ENCODE measurements at regions of chr12 and their contacts with region 1.

Region 1: DNA sequence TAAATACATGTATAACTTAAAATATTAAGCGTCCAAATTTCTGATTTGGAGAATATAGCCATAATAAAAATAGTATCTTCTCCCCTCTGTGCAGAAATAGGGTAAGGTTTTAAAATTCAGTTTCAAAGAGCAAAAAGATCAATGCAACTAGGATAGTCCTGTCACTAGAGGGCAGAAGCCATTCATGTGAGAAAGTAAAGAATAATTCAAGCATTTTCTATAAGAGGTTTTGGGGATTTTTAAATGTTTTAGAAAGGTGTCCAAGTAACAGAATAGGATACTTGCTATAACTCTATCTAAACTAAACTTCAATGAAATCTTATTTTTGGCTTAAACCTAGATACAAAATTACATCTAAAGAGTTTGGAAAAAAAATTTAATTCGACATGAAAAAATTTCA is 50.3 kb downstream of the ADAMTS20 start:
- DNase-seq: peak; percentile 34
- ATAC-seq: peak; percentile 51; the same call in 1 of the 2 replicates
- H3K4me3 ChIP-seq: no peak overlapping the region
- H3K27ac ChIP-seq: no peak overlapping the region
- H3K4me1 ChIP-seq: no peaks in the 10 kb centered on the region
- H3K27me3 ChIP-seq: no peaks in the 10 kb centered on the region
- CTCF ChIP-seq: peak; percentile 60
- POLR2A ChIP-seq: no peak
- RAD21 ChIP-seq: peak; percentile 65

Region 2: DNA sequence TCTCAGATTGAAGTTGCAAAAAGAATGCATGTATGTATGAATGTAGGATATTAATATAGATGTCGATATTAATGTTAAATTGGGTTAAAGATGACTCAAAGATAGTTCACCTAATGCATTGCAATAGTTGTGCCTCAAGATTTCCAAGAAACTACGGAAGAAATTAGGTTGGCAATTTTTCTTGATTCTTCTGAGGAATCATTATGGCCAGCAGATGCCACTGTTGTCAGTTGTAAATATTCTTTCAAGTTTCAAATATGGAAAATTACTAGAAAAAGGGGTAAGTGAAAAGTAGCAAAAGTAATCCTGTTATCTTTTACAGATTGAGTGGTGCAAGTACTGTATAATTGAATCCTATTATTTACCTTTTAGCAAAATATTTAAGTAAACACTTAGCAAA is 151.8 kb before region 1 on chr12:
- CTCF ChIA-PET with region 1: no interaction called
- POLR2A ChIA-PET with region 1: no interaction called
- dilution Hi-C with region 1: no loop called
- in situ Hi-C with region 1: no loop called
- intact Hi-C with region 1: loop called (anchors 5 kb)
- DNase-seq: peak; percentile 31
- ATAC-seq: peak; percentile 27; the same call in 1 of the 2 replicates
- H3K4me3 ChIP-seq: no peak overlapping the region
- H3K27ac ChIP-seq: no peak overlapping the region
- H3K4me1 ChIP-seq: no peaks in the 10 kb centered on the region
- H3K27me3 ChIP-seq: no peaks in the 10 kb centered on the region
- CTCF ChIP-seq: peak; percentile 49
- POLR2A ChIP-seq: no peak
- RAD21 ChIP-seq: peak; percentile 39; the same call in 1 of the 2 replicates

Region 3: GRCh38 chr12:43516045-43516444 is 14.3 kb after region 1 on chr12:
- CTCF ChIA-PET with region 1: no interaction called
- POLR2A ChIA-PET with region 1: no interaction called
- dilution Hi-C with region 1: no loop called
- in situ Hi-C with region 1: no loop called
- intact Hi-C with region 1: no loop called
- DNase-seq: no peak
- ATAC-seq: no peak
- H3K4me3 ChIP-seq: no peak overlapping the region
- H3K27ac ChIP-seq: no peak overlapping the region
- H3K4me1 ChIP-seq: no peaks in the 10 kb centered on the region
- H3K27me3 ChIP-seq: no peaks in the 10 kb centered on the region
- CTCF ChIP-seq: no peak
- POLR2A ChIP-seq: no peak
- RAD21 ChIP-seq: no peak

Measured in IMR-90 (cell line).